PC-9 (cell line): ENCODE measurements at regions of chr13 and their contacts with region 1.

Region 1: DNA sequence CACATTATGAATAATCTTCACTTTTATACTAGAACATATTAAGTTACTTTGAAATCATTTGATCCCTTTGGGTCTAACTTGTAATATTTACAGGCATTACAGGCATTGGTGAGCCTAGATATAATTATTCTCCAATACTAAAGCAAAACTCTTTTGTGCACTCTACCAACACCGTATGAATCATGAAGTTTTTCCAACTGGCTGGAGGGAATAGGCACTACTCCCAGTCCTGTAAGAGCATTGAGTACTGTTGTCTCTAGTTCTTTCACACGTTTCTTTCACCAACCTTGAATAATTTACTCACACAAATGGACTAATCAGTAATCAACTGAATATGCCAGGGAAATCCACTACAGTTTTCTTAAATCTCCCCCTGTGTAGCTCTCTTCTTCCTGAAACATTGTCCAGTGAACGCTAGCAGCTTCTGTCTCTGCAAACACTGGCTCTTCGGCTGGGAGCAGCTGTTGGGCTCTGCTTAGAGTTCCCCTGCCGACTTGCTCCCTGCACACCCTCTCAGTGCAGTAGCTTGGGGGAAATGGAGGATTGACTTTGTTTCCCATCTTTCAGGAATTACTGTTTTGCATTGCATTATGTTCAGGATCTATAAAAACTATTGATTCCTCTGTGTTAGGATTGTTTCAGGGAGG is 476.7 kb downstream of the RFC3 start:
- DNase-seq: no peak
- H3K4me3 ChIP-seq: no peak overlapping the region
- H3K27ac ChIP-seq: no peak overlapping the region
- H3K4me1 ChIP-seq: no peaks in the 10 kb centered on the region
- H3K27me3 ChIP-seq: no peaks in the 10 kb centered on the region
- CTCF ChIP-seq: no peak

Region 2: GRCh38 chr13:33865945-33866344 is 428.7 kb before region 1 on chr13:
- CTCF ChIA-PET with region 1: no interaction called
- POLR2A ChIA-PET with region 1: no interaction called
- intact Hi-C with region 1: no loop called
- DNase-seq: no peak
- H3K4me3 ChIP-seq: no peak overlapping the region
- H3K27ac ChIP-seq: no peak overlapping the region
- H3K4me1 ChIP-seq: 0 out of 2 replicates have a peak, but pooled peaks cover 6% of the 10 kb centered on the region
- H3K27me3 ChIP-seq: no peaks in the 10 kb centered on the region
- CTCF ChIP-seq: no peak

Region 3: DNA sequence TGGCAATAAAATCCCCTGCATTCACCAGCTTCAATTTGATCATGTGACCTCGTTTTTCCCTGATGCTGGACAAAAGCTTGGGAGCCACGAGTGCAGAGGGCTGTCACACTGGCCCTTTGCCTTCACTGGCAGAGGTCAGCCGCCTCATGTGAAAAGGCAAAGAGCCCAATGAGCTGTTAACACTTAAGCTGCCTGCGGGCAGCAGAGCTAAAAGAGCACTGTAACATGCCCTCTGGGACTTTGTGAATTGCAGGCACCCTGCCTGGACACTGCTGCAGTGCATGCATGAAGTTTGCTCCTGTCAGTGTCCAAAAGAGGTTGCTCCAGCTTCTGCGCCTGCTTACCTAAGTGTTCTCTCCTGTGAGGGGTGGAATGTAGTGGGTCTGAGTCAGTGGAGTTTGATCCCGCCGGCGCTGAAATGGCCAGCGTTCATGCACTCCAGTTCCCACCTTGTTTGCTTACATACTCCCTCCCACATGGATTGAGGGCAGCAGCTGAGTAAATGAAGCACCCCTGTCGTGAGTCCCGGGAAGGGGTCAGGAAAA is 283.0 kb before region 1 on chr13:
- CTCF ChIA-PET with region 1: no interaction called
- POLR2A ChIA-PET with region 1: interaction called, 15 read pairs
- intact Hi-C with region 1: no loop called
- DNase-seq: no peak
- H3K4me3 ChIP-seq: no peak overlapping the region
- H3K27ac ChIP-seq: no peak overlapping the region
- H3K4me1 ChIP-seq: no peaks in the 10 kb centered on the region
- H3K27me3 ChIP-seq: no peaks in the 10 kb centered on the region
- CTCF ChIP-seq: no peak

Region 4: DNA sequence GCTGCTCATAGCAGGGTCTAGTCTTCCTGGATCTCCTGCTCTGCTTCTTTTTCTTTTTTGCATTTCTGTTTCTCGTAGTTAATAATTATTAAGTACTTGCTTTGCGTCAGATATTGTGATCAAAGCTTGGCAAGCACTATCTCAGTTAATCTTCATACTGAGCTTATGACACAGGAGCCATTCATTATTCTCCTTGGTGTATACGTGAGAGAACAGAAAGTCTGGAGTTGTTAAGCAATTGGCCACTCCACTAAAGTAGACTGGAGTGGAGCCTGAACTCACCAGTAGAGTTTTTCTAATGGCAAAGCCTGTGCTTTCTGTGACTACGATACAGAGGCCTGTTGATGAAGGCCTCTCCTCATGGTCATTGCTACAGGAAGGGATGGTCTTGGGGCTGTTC is 190.8 kb before region 1 on chr13:
- CTCF ChIA-PET with region 1: no interaction called
- POLR2A ChIA-PET with region 1: no interaction called
- intact Hi-C with region 1: no loop called
- DNase-seq: no peak
- H3K4me3 ChIP-seq: no peak overlapping the region
- H3K27ac ChIP-seq: no peak overlapping the region
- H3K4me1 ChIP-seq: 0 out of 2 replicates have a peak, but pooled peaks cover 7% of the 10 kb centered on the region
- H3K27me3 ChIP-seq: no peaks in the 10 kb centered on the region
- CTCF ChIP-seq: no peak

Region 5: GRCh38 chr13:34230271-34230670 is 64.3 kb before region 1 on chr13:
- CTCF ChIA-PET with region 1: no interaction called
- POLR2A ChIA-PET with region 1: no interaction called
- intact Hi-C with region 1: no loop called
- DNase-seq: no peak
- H3K4me3 ChIP-seq: no peak overlapping the region
- H3K27ac ChIP-seq: no peak overlapping the region
- H3K4me1 ChIP-seq: no peaks in the 10 kb centered on the region
- H3K27me3 ChIP-seq: no peaks in the 10 kb centered on the region
- CTCF ChIP-seq: no peak

Region 6: DNA sequence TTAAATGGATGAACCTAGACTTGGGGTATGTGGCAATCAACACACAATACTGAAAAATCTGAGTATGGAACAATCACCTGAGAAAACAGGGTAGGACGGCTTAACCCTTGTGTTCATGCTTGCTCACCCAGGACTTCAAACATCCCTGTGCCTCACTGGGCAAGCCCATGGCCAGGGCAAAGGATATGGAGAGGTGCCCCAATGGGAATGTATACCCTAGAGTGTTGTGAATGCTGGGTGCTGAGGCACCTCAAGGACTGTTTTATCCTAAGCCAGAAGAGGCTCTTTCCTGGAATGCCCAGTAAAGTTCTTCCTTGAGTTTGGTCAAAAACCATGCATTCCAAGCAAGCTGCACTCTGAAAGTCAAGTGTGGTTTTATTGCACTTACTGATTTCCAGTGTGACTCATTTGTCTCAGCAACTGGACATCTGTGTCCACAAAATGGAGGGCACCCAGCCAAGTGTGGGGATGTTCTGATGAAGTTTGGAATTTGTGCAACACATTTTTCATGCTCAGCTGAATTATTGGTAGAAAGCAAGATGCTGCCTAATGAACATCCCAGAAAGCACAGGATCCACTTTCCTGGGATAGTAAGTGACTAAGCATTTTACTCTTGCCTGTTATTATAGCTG is 54.6 kb after region 1 on chr13:
- CTCF ChIA-PET with region 1: no interaction called
- POLR2A ChIA-PET with region 1: no interaction called
- intact Hi-C with region 1: no loop called
- DNase-seq: peak; percentile 68 to 91
- H3K4me3 ChIP-seq: no peak overlapping the region
- H3K27ac ChIP-seq: peak overlapping the region; percentile 88
- H3K4me1 ChIP-seq: peaks cover 50% of the 10 kb centered on the region
- H3K27me3 ChIP-seq: no peaks in the 10 kb centered on the region
- CTCF ChIP-seq: no peak